ENCODE measurements at regions of chr9 and their contacts with region 1.

Region 1: GRCh38 chr9:126490871-126491567 is 122.7 kb upstream of the LMX1B start:
- DNase-seq: peak in 7 of 9 experiments; percentile 41 to 82 (median 68)
- ATAC-seq: peak; percentile 74
- H3K4me3 ChIP-seq: no peak overlapping the region
- H3K4me3 Mint-ChIP-seq: no peak overlapping the region
- H3K27ac ChIP-seq: no peak overlapping the region
- H3K27ac Mint-ChIP-seq: no peak overlapping the region
- H3K4me1 ChIP-seq: peaks cover 16% of the 10 kb centered on the region
- H3K4me1 Mint-ChIP-seq: peaks cover 16% of the 10 kb centered on the region
- H3K27me3 ChIP-seq: no peaks in the 10 kb centered on the region
- H3K27me3 Mint-ChIP-seq: no peaks in the 10 kb centered on the region
- CTCF ChIP-seq: peak; percentile 88

Region 2: GRCh38 chr9:124697326-124698200 is 1793.5 kb before region 1 on chr9:
- CTCF ChIA-PET with region 1: no interaction called
- POLR2A ChIA-PET with region 1: no interaction called
- intact Hi-C with region 1: no loop called
- DNase-seq: no peak
- ATAC-seq: no peak
- H3K4me3 ChIP-seq: no peak overlapping the region
- H3K4me3 Mint-ChIP-seq: no peak overlapping the region
- H3K27ac ChIP-seq: no peak overlapping the region
- H3K27ac Mint-ChIP-seq: no peak overlapping the region
- H3K4me1 ChIP-seq: no peaks in the 10 kb centered on the region
- H3K4me1 Mint-ChIP-seq: no peaks in the 10 kb centered on the region
- H3K27me3 ChIP-seq: no peaks in the 10 kb centered on the region
- H3K27me3 Mint-ChIP-seq: no peaks in the 10 kb centered on the region
- CTCF ChIP-seq: no peak

Region 3: DNA sequence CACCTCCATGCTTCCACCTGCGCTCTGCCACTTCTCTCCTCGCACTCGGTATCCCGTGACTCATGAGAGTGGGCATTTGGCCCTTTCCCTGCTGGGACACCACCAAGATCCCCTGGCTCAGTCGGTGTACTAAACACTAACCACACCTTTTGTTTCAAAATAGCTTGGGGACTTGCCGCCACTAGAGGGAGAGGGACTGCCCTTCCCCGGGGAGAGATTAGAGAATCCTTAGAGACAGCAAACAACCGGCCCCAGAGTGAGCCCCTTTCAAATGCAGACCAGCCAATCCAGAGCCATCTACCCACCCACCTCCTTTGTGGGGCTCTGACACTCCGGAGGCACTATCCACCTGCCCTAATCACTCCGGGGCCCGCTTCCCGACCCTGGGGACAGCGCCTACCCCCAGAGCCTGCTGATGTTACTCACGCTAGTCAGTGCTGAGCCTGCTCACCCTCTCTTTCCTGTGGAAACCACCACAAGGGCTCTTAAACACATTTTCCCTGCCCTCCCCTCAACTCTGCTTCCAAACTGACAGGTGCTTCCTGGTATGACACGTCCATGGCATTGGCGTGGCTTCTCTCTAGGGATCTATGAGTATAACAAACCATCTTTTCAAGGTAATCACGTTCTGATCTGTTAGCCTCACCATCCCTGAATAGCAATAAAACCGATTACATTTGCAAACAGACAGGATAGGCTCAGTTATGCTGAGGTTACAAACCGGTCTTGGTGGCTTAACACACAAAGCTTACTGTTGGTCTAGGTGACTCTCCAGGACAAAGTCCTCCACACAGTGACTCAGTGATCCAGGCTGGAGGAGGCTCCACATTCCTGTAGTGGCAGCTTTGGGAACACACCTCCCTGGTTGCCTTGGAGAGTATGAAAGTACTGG is 344.5 kb before region 1 on chr9:
- CTCF ChIA-PET with region 1: no interaction called
- POLR2A ChIA-PET with region 1: no interaction called
- intact Hi-C with region 1: loop called in 1 of 2 experiments (anchors 2 kb)
- DNase-seq: peak in 3 of 9 experiments; percentile 13 to 44 (median 35)
- ATAC-seq: peak; percentile 46
- H3K4me3 ChIP-seq: no peak overlapping the region
- H3K4me3 Mint-ChIP-seq: no peak overlapping the region
- H3K27ac ChIP-seq: no peak overlapping the region
- H3K27ac Mint-ChIP-seq: no peak overlapping the region
- H3K4me1 ChIP-seq: peaks cover 6% of the 10 kb centered on the region
- H3K4me1 Mint-ChIP-seq: peaks cover 2% of the 10 kb centered on the region
- H3K27me3 ChIP-seq: peaks cover 0 to 4% of the 10 kb centered on the region in 2 experiments
- H3K27me3 Mint-ChIP-seq: peaks cover 31% of the 10 kb centered on the region
- CTCF ChIP-seq: no peak

Region 4: DNA sequence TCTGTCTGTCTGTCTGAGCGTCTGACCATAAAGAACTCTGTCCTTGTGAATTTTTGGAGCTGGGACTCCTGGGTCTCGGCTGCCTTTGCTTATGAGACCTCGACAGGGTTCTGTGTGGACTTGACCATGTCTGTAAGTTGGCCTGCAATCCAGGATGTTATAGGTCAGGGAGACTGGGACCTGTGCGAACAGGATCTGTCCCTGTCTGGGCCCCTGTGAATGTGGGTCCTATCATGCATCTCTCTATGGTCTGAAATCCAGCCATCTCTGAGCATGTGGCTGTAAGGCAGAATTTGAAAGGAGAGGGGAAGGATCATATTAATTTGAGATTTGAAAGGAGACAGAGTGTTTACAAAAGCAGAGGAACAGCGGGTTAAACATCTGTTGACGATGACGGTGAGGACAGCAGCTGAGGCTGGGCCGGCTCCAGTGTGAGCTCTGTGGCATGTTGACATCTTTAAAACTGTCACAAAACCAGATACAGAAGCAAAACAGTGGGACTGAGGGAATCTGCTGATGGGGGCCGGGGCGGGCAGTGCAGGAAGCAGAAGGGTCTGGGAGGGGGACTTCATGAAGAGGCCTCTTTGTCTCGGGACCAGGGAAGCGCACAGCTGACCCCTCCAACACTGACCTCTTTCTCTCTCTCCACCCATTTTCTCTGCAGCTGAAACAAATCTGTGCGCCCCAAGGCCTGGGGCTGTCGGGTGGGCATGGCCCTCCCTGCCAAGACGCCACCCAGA is 183.5 kb before region 1 on chr9:
- CTCF ChIA-PET with region 1: interaction called, 62 read pairs
- POLR2A ChIA-PET with region 1: no interaction called
- intact Hi-C with region 1: loop called (anchors 1 kb)
- DNase-seq: peak in 1 of 9 experiments; percentile 35
- ATAC-seq: no peak
- H3K4me3 ChIP-seq: no peak overlapping the region
- H3K4me3 Mint-ChIP-seq: no peak overlapping the region
- H3K27ac ChIP-seq: no peak overlapping the region
- H3K27ac Mint-ChIP-seq: no peak overlapping the region
- H3K4me1 ChIP-seq: no peaks in the 10 kb centered on the region
- H3K4me1 Mint-ChIP-seq: no peaks in the 10 kb centered on the region
- H3K27me3 ChIP-seq: no peaks in the 10 kb centered on the region
- H3K27me3 Mint-ChIP-seq: peaks cover 2% of the 10 kb centered on the region
- CTCF ChIP-seq: no peak

Region 5: GRCh38 chr9:126347911-126348760 is 142.9 kb before region 1 on chr9:
- CTCF ChIA-PET with region 1: interaction called, 11 read pairs
- POLR2A ChIA-PET with region 1: no interaction called
- intact Hi-C with region 1: no loop called
- DNase-seq: no peak
- ATAC-seq: no peak
- H3K4me3 ChIP-seq: no peak overlapping the region
- H3K4me3 Mint-ChIP-seq: no peak overlapping the region
- H3K27ac ChIP-seq: no peak overlapping the region
- H3K27ac Mint-ChIP-seq: peak overlapping the region; percentile 57
- H3K4me1 ChIP-seq: peaks cover 7% of the 10 kb centered on the region
- H3K4me1 Mint-ChIP-seq: peaks cover 38% of the 10 kb centered on the region
- H3K27me3 ChIP-seq: no peaks in the 10 kb centered on the region
- H3K27me3 Mint-ChIP-seq: no peaks in the 10 kb centered on the region
- CTCF ChIP-seq: no peak

Region 6: DNA sequence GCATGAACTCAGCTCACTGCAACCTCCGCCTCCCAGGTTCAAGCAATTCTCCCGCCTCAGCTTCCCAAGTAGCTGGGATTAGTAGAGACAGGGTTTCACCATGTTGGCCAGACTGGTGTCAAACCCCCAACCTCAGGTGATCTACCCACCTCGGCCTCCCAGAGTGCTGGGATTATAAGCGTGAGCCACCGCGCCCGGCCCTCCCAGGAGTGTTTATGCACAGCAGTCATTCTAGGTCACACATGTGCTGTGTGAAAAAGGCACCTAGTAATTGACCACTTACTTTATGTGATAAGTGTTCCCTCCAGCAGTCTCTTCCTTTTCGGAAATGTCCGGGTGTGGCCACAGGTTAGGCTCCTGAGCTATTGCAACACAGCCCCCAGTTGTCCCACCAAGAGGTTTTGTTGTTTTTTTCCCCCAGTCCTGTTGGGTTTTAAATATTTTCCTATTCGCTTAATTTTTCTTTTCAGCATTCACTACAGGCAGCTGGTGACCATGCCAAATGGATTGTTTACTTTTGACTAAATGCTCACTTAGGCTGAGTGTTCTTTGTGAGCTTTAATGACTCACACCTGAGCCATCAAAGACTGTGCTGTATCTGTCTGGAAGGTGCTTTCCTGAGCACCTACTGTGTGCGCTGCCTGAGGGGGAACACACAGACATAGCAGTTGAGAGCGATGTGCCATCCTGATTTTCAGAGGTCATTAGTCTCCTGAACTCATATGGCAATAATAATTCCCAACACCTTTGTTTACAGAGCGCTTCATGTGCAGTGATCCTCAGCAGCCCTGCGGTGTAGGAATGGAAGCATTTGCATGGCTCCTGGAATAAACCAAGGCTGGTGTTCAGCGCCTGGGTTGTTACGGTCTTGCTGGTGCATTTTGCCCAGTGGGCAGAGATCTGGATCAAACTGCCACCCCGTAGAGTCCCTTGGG is 70.1 kb before region 1 on chr9:
- CTCF ChIA-PET with region 1: interaction called, 13 read pairs
- POLR2A ChIA-PET with region 1: no interaction called
- intact Hi-C with region 1: no loop called
- DNase-seq: no peak
- ATAC-seq: no peak
- H3K4me3 ChIP-seq: no peak overlapping the region
- H3K4me3 Mint-ChIP-seq: no peak overlapping the region
- H3K27ac ChIP-seq: no peak overlapping the region
- H3K27ac Mint-ChIP-seq: no peak overlapping the region
- H3K4me1 ChIP-seq: peaks cover 21% of the 10 kb centered on the region
- H3K4me1 Mint-ChIP-seq: peaks cover 44% of the 10 kb centered on the region
- H3K27me3 ChIP-seq: no peaks in the 10 kb centered on the region
- H3K27me3 Mint-ChIP-seq: no peaks in the 10 kb centered on the region
- CTCF ChIP-seq: no peak

Region 7: GRCh38 chr9:126462617-126463016 is 28.4 kb before region 1 on chr9:
- CTCF ChIA-PET with region 1: interaction called, 25 read pairs
- POLR2A ChIA-PET with region 1: interaction called, 3 read pairs
- intact Hi-C with region 1: no loop called
- DNase-seq: no peak
- ATAC-seq: no peak
- H3K4me3 ChIP-seq: no peak overlapping the region
- H3K4me3 Mint-ChIP-seq: no peak overlapping the region
- H3K27ac ChIP-seq: no peak overlapping the region
- H3K27ac Mint-ChIP-seq: no peak overlapping the region
- H3K4me1 ChIP-seq: no peaks in the 10 kb centered on the region
- H3K4me1 Mint-ChIP-seq: peaks cover 24% of the 10 kb centered on the region
- H3K27me3 ChIP-seq: no peaks in the 10 kb centered on the region
- H3K27me3 Mint-ChIP-seq: no peaks in the 10 kb centered on the region
- CTCF ChIP-seq: no peak

Region 8: DNA sequence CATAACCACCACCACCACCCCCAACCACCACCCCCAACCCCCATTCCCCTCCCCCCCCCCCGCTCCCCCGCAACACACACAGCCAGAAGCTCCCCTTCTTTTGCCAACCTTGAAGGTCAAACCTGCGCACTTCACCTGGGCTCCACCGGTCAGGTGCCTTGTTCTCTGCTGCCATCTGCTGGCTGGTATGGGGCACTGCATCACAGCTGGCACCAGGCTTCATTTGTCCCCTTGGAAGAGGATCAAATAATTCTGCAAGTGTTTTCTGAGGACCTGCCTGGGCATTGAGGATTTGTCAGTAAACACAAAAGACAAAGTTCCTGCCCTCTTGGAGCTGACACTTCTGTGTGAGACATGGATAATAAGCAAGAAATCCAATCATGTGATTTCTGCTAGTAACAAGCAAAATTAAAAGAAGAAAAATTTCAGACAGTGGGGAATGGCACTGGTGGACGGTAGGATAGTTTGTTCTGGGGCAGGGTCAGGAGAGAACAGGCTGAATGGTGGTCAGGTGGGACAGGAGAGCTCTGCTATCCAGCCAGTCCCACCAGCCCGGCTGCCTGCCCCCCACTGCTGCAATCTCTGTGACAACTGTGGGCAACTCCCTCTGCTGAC is 67.1 kb after region 1 on chr9:
- CTCF ChIA-PET with region 1: interaction called, 187 read pairs
- POLR2A ChIA-PET with region 1: interaction called, 3 read pairs
- intact Hi-C with region 1: no loop called
- DNase-seq: peak; percentile 33 to 85 (median 68)
- ATAC-seq: peak; percentile 88
- H3K4me3 ChIP-seq: no peak overlapping the region
- H3K4me3 Mint-ChIP-seq: no peak overlapping the region
- H3K27ac ChIP-seq: no peak overlapping the region
- H3K27ac Mint-ChIP-seq: no peak overlapping the region
- H3K4me1 ChIP-seq: no peaks in the 10 kb centered on the region
- H3K4me1 Mint-ChIP-seq: no peaks in the 10 kb centered on the region
- H3K27me3 ChIP-seq: peaks cover 3 to 4% of the 10 kb centered on the region in 2 experiments
- H3K27me3 Mint-ChIP-seq: peaks cover 27% of the 10 kb centered on the region
- CTCF ChIP-seq: peak; percentile 80

Measured in CD8-positive, alpha-beta T cell (primary cell).